ENCODE measurements at regions of chr10 and their contacts with region 1.

Region 1: GRCh38 chr10:102085336-102085735 is 20.2 kb downstream of the HPS6 start:
- DNase-seq: no peak
- H3K27ac ChIP-seq: no peak overlapping the region
- CTCF ChIP-seq: no peak

Region 2: GRCh38 chr10:102024799-102025198 is 60.5 kb before region 1 on chr10:
- CTCF ChIA-PET with region 1: no interaction called
- POLR2A ChIA-PET with region 1: no interaction called
- DNase-seq: no peak
- H3K27ac ChIP-seq: no peak overlapping the region
- CTCF ChIP-seq: no peak

Region 3: GRCh38 chr10:102072673-102073527 is 12.4 kb before region 1 on chr10:
- CTCF ChIA-PET with region 1: interaction called, 17 read pairs
- POLR2A ChIA-PET with region 1: interaction called, 3 read pairs
- DNase-seq: peak; percentile 74
- H3K27ac ChIP-seq: peak overlapping the region; percentile 6; the same call in 1 of the 2 replicates
- CTCF ChIP-seq: peak; percentile 92

Measured in RWPE1 (cell line).